OCI-LY7 (cell line): ENCODE measurements at regions of chr13 and their contacts with region 1.

Region 1: GRCh38 chr13:21297914-21298831 is 121.7 kb downstream of the MRPL57 start:
- DNase-seq: peak; percentile 94
- H3K4me3 ChIP-seq: peak overlapping the region; percentile 92
- H3K27ac ChIP-seq: peak overlapping the region; percentile 51
- H3K4me1 ChIP-seq: peaks cover 17% of the 10 kb centered on the region
- CTCF ChIP-seq: peak; percentile 77

Region 2: GRCh38 chr13:19959831-19960652 is 1338.1 kb before region 1 on chr13:
- CTCF ChIA-PET with region 1: no interaction called
- POLR2A ChIA-PET with region 1: no interaction called
- intact Hi-C with region 1: loop called (anchors 5 kb)
- DNase-seq: peak; percentile 94
- H3K4me3 ChIP-seq: peak overlapping the region; percentile 96
- H3K27ac ChIP-seq: peak overlapping the region; percentile 83
- H3K4me1 ChIP-seq: peaks cover 28% of the 10 kb centered on the region
- CTCF ChIP-seq: peak; percentile 86

Region 3: GRCh38 chr13:20773194-20774080 is 524.7 kb before region 1 on chr13 and contains the start of gene EEF1AKMT1:
- CTCF ChIA-PET with region 1: no interaction called
- POLR2A ChIA-PET with region 1: no interaction called
- intact Hi-C with region 1: loop called (anchors 2 kb)
- DNase-seq: peak; percentile 86
- H3K4me3 ChIP-seq: peak within 1 kb of the TSS; percentile 65
- H3K27ac ChIP-seq: peak within 1 kb of the TSS; percentile 69
- H3K4me1 ChIP-seq: peaks cover 8% of the 10 kb centered on the region
- CTCF ChIP-seq: no peak
- total RNA-seq, gene EEF1AKMT1: 1.3 and 2.5 TPM in 2 replicates

Region 4: GRCh38 chr13:21106089-21106488 is 192.1 kb before region 1 on chr13:
- CTCF ChIA-PET with region 1: no interaction called
- POLR2A ChIA-PET with region 1: no interaction called
- intact Hi-C with region 1: loop called (anchors 1 kb)
- DNase-seq: no peak
- H3K4me3 ChIP-seq: no peak overlapping the region
- H3K27ac ChIP-seq: no peak overlapping the region
- H3K4me1 ChIP-seq: no peaks in the 10 kb centered on the region
- CTCF ChIP-seq: no peak

Region 5: GRCh38 chr13:21458813-21459701 is 160.9 kb after region 1 on chr13 and contains the start of gene ZDHHC20:
- CTCF ChIA-PET with region 1: no interaction called
- POLR2A ChIA-PET with region 1: interaction called, 4 read pairs
- intact Hi-C with region 1: loop called (anchors 2 kb)
- DNase-seq: peak; percentile 86
- H3K4me3 ChIP-seq: peak within 1 kb of the TSS; percentile 81
- H3K27ac ChIP-seq: peak within 1 kb of the TSS; percentile 77
- H3K4me1 ChIP-seq: peaks cover 20% of the 10 kb centered on the region
- CTCF ChIP-seq: no peak
- total RNA-seq, gene ZDHHC20: 37.1 and 39.6 TPM in 2 replicates

Region 6: DNA sequence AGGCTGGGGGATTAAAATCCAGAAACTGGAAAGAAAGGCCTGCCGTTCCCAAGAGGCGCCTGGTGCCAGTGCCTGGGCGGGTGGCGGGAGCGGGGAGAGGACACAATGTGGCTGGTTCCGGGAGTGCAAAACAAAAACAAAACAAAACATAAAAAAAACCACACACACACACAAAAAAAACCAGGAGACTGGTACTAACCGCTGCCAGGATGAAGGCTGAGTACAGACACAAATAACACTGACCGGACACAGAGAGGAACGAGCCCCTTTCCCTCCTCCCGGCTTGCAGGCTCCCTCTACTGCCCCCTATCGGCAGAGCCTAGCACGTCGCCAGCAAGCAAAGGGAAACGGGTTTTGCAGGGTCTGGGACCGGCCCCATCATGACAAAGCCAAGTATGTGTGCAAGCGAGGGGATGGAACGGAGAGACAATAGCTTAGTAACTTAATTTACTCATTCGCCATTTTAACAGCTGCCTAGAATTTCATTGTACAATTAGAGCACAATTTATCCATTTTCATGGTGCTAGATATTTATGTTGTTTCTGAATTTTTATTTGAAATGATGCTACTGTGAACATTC is 178.8 kb after region 1 on chr13:
- CTCF ChIA-PET with region 1: interaction called, 4 read pairs
- POLR2A ChIA-PET with region 1: interaction called, 5 read pairs
- intact Hi-C with region 1: loop called (anchors 1 kb)
- DNase-seq: peak; percentile 81
- H3K4me3 ChIP-seq: peak overlapping the region; percentile 55
- H3K27ac ChIP-seq: no peak overlapping the region
- H3K4me1 ChIP-seq: no peaks in the 10 kb centered on the region
- CTCF ChIP-seq: peak; percentile 95

Region 7: GRCh38 chr13:21670883-21671619 is 372.9 kb after region 1 on chr13 and contains the start of gene FGF9:
- CTCF ChIA-PET with region 1: no interaction called
- POLR2A ChIA-PET with region 1: no interaction called
- intact Hi-C with region 1: loop called (anchors 5 kb)
- DNase-seq: peak; percentile 92
- H3K4me3 ChIP-seq: peak within 1 kb of the TSS; percentile 90
- H3K27ac ChIP-seq: peak within 1 kb of the TSS; percentile 72
- H3K4me1 ChIP-seq: peaks cover 41% of the 10 kb centered on the region
- CTCF ChIP-seq: no peak
- total RNA-seq, gene FGF9: 2.2 and 4.7 TPM in 2 replicates